ENCODE measurements at regions of chr1 and their contacts with region 1.

Region 1: DNA sequence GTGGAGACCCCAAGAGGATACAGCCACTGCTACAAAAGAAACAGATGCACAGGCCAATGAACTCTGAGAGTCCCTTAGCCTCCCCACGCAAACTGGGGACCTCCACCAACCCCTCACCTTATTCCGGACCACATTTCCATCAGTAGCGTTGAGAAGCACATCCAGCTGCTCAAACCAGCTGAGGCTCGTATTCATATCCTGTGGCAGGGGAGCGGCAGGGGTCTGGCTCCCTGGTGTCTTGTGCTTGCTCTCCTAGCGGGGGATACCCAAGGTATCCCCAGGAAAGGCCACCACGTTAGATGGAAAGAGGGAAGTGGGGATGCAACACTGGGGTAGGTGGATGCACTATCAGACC is 481 bp downstream of the CCDC163 start:
- DNase-seq: no peak
- H3K27ac ChIP-seq: peak overlapping the region; percentile 74
- CTCF ChIP-seq: no peak

Region 2: GRCh38 chr1:44780583-44781121 is 718.7 kb before region 1 on chr1:
- CTCF ChIA-PET with region 1: no interaction called
- POLR2A ChIA-PET with region 1: interaction called, 10 read pairs
- DNase-seq: no peak
- H3K27ac ChIP-seq: peak overlapping the region; percentile 59
- CTCF ChIP-seq: no peak

Region 3: GRCh38 chr1:45334308-45335245 is 164.8 kb before region 1 on chr1:
- CTCF ChIA-PET with region 1: no interaction called
- POLR2A ChIA-PET with region 1: no interaction called
- DNase-seq: no peak
- H3K27ac ChIP-seq: 0 out of 2 replicates have a peak overlapping the region, but pooled peaks have one; percentile 4
- CTCF ChIP-seq: no peak

Region 4: GRCh38 chr1:45393718-45394302 is 105.6 kb before region 1 on chr1:
- CTCF ChIA-PET with region 1: no interaction called
- POLR2A ChIA-PET with region 1: no interaction called
- DNase-seq: no peak
- H3K27ac ChIP-seq: peak overlapping the region; percentile 51; the same call in 1 of the 2 replicates
- CTCF ChIP-seq: no peak

Region 5: GRCh38 chr1:45621501-45621836 is 122.1 kb after region 1 on chr1:
- CTCF ChIA-PET with region 1: no interaction called
- POLR2A ChIA-PET with region 1: no interaction called
- DNase-seq: no peak
- H3K27ac ChIP-seq: peak overlapping the region; percentile 58
- CTCF ChIP-seq: no peak